AG04449 (cell line): ENCODE measurements at regions of chr2 and their contacts with region 1.

Region 1: DNA sequence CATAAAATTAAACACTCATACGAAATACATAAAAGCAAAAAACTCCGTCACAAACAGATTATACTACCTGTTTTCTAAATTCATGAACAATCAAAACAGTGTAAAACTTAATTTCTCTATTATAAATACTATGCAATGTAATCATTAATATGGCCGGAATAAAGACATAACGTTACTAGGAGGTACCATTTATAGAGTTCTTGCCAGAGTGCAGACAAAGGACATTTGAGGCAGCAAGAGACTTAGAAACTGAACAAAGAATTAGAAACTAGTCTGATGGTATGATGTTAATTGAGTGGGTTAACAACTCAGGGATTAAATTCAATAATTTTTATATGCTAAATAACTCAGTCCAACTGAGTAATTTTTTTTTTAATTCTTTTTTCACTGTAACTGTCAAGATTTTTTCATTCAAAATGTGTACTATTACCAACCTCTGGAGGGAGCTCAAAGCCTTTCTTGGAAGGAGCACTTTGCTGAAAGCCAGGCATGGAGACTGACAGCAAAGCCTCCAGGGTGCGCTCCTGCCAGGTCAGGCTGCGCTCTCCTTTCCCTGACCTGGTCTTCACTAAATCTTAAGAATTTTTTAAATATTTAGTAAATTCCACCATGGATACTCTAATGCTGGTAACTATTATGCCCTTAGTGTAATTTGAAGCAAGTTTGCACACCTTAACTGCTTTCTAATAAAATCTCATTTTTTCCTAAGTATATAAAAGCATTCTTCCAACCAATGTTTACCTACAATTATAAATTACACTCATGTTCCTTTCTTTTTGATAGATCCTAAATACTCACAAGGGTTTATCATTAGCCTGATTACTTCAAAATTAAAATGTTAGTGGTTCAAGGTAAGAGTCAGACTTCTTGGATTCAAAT is 34.1 kb downstream of the WDR35 start:
- DNase-seq: peak; percentile 16
- H3K4me3 ChIP-seq: no peak overlapping the region
- CTCF ChIP-seq: peak; percentile 80

Region 2: GRCh38 chr2:19944205-19944845 is 11.5 kb before region 1 on chr2:
- CTCF ChIA-PET with region 1: interaction called, 30 read pairs
- POLR2A ChIA-PET with region 1: no interaction called
- DNase-seq: no peak
- H3K4me3 ChIP-seq: no peak overlapping the region
- CTCF ChIP-seq: no peak

Region 3: DNA sequence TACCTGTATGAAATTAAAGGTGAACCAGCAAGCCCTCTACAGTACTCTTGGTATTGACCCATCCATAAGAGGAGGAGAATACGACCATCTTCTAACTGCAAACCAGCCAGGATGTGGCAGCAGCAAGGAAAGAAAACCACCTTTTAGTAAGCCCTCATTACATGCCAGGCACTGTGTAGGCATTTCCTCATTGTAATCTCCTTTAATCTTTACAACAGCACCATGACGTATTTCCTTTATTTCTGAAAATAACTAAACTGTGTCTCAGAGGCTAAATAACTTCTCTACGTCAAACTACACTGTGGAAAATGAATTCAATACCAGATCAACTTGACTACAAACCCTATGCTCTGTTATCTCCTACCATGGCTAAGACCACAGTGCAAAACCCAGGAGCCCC is 15.9 kb after region 1 on chr2:
- CTCF ChIA-PET with region 1: interaction called, 29 read pairs
- POLR2A ChIA-PET with region 1: no interaction called
- DNase-seq: no peak
- H3K4me3 ChIP-seq: no peak overlapping the region
- CTCF ChIP-seq: no peak

Region 4: GRCh38 chr2:20091305-20091991 is 135.7 kb after region 1 on chr2:
- CTCF ChIA-PET with region 1: interaction called, 11 read pairs
- POLR2A ChIA-PET with region 1: no interaction called
- DNase-seq: peak; percentile 85
- H3K4me3 ChIP-seq: no peak overlapping the region; the same call in 1 of the 2 replicates
- CTCF ChIP-seq: no peak